Endothelial cell of umbilical vein (primary cell): ENCODE measurements at regions of chr6 and their contacts with region 1.

Region 1: DNA sequence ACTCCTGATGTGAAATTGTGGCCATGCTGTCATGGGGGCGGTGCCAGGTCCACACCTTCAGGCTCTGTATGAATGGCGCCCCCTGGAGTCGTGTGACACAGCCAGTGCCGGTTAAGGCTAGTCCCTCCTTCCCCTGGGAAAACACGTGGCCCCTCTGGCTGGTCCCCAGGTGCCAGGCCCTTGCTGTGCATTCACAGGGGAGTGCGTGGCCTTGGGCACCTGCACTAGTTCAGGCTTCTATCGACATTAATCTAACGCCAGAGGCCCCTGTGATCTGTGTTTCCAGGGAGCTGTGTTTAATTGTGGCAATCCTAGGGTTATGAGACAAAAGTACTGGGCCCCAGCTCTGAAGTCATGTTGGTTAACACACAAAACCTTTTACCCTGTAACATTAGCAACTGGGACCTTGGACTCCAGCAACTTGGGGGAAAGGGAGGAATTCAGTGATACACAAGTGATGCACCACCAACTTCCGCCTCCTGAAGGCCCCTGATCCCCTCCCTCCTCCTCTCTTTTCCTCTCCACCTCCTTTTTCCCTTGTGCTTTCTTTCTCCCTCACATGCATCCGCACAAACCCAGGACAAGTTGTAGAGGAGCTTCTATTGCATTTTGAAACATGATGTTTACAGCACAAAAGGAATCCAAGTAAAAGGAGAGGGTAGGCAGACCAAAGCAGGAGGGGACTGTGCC is 74.0 kb downstream of the SSR1 start:
- DNase-seq: peak; percentile 66
- H3K4me3 ChIP-seq: no peak overlapping the region
- H3K27ac ChIP-seq: no peak overlapping the region
- H3K4me1 ChIP-seq: no peaks in the 10 kb centered on the region
- H3K27me3 ChIP-seq: no peaks in the 10 kb centered on the region
- CTCF ChIP-seq: peak; percentile 79 to 83
- POLR2A ChIP-seq: no peak

Region 2: DNA sequence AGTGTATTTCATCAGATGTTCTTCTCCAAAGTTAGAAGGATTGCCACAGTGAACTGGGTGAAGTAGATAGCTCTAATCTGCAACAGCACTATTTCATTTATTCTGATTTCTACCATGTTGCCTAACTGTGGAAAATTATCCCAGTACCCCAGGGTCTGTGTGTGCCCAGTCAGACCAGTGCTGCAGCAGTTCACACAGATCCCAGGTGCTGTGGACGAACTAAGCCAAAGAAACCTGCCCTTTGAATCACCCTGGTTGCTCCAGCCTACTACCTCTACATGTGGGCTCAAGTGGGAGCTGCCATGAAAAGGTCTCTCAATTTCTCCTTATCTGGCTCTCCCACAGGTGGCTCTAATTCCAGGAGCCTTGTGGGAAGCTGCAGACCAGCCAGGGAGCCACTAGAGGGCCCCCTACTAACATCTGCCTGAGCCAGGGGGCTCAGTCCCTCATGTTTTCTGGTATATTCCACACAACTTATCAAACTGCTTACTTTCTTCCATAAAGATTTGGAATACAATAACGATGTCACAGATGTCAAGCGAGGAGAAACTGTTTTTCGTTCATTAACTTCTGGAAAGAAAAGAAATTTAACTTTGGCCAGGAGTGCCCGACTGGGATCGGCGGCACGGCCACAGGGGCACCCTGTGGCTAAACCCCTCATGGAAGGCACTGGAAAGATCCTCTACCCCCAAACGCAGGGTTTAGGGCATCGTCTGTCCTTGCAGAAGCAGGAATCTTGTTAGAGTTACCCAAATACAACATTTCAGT is 682.1 kb before region 1 on chr6:
- CTCF ChIA-PET with region 1: no interaction called
- POLR2A ChIA-PET with region 1: no interaction called
- dilution Hi-C with region 1: no loop called
- intact Hi-C with region 1: loop called (anchors 1 kb)
- DNase-seq: peak; percentile 44
- H3K4me3 ChIP-seq: no peak overlapping the region
- H3K27ac ChIP-seq: no peak overlapping the region
- H3K4me1 ChIP-seq: no peaks in the 10 kb centered on the region
- H3K27me3 ChIP-seq: no peaks in the 10 kb centered on the region
- CTCF ChIP-seq: peak; percentile 84 to 89
- POLR2A ChIP-seq: no peak

Region 3: GRCh38 chr6:6758915-6759654 is 480.0 kb before region 1 on chr6:
- CTCF ChIA-PET with region 1: interaction called, 8 read pairs
- POLR2A ChIA-PET with region 1: no interaction called
- dilution Hi-C with region 1: no loop called
- intact Hi-C with region 1: loop called (anchors 1 kb)
- DNase-seq: peak; percentile 64
- H3K4me3 ChIP-seq: no peak overlapping the region
- H3K27ac ChIP-seq: no peak overlapping the region
- H3K4me1 ChIP-seq: no peaks in the 10 kb centered on the region
- H3K27me3 ChIP-seq: peaks cover 0 to 4% of the 10 kb centered on the region in 2 experiments
- CTCF ChIP-seq: peak; percentile 40 to 45
- POLR2A ChIP-seq: no peak

Region 4: GRCh38 chr6:6811151-6812002 is 427.7 kb before region 1 on chr6:
- CTCF ChIA-PET with region 1: no interaction called
- POLR2A ChIA-PET with region 1: no interaction called
- dilution Hi-C with region 1: no loop called
- intact Hi-C with region 1: loop called (anchors 2 kb)
- DNase-seq: peak; percentile 91
- H3K4me3 ChIP-seq: peak overlapping the region; percentile 24 to 69 (median 37)
- H3K27ac ChIP-seq: peak overlapping the region; percentile 91
- H3K4me1 ChIP-seq: peaks cover 17% of the 10 kb centered on the region
- H3K27me3 ChIP-seq: peaks cover 2 to 12% of the 10 kb centered on the region in 2 experiments
- CTCF ChIP-seq: no peak
- POLR2A ChIP-seq: no peak

Region 5: DNA sequence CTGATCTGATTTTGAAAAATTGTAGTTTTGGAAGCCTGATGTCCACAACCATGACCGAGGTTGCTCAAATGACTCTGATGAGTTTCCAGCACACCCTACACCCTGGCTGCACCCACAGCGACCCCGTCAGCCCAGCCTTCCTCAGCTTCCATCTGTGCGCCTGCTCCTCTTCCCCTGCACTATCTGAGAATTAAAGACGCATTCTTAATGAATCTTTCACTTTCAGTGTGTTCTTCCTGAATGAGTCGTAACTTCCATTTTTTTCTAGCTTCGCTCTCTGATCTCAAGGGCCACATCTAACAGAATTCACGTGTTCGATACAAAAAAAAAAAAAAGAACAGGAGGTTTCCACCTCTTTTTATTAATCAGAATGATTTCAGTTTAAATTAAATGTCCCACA is 152.6 kb before region 1 on chr6:
- CTCF ChIA-PET with region 1: no interaction called
- POLR2A ChIA-PET with region 1: no interaction called
- dilution Hi-C with region 1: no loop called
- intact Hi-C with region 1: loop called (anchors 1 kb)
- DNase-seq: peak; percentile 57
- H3K4me3 ChIP-seq: peak overlapping the region; percentile 27 to 90 (median 85)
- H3K27ac ChIP-seq: no peak overlapping the region
- H3K4me1 ChIP-seq: peaks cover 8% of the 10 kb centered on the region
- H3K27me3 ChIP-seq: no peaks in the 10 kb centered on the region
- CTCF ChIP-seq: no peak
- POLR2A ChIP-seq: no peak

Region 6: DNA sequence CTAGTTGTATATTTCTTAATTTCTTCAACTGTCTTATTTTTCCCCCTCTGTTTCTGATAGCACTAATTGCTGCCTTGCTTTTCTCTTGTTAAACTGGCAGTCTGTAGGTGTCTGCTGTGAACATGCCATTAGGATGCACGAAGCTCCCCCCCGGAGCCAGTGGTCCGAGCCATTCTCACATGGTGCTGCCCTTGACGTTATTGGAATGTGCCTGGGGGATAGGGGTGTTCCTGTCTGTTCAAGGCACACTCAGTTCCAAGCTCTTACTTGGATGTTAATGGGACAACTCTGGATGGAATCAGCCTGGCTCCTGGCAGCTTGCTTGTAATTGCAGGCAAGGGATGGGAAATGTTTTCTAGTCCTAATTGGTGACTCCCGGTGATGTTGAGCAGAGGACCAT is 62.8 kb before region 1 on chr6:
- CTCF ChIA-PET with region 1: no interaction called
- POLR2A ChIA-PET with region 1: no interaction called
- dilution Hi-C with region 1: no loop called
- intact Hi-C with region 1: no loop called
- DNase-seq: no peak
- H3K4me3 ChIP-seq: no peak overlapping the region
- H3K27ac ChIP-seq: no peak overlapping the region
- H3K4me1 ChIP-seq: peaks cover 12% of the 10 kb centered on the region
- H3K27me3 ChIP-seq: no peaks in the 10 kb centered on the region
- CTCF ChIP-seq: no peak
- POLR2A ChIP-seq: no peak

Region 7: GRCh38 chr6:7254980-7255835 is 16.2 kb after region 1 on chr6:
- CTCF ChIA-PET with region 1: interaction called, 14 read pairs
- POLR2A ChIA-PET with region 1: no interaction called
- dilution Hi-C with region 1: no loop called
- intact Hi-C with region 1: no loop called
- DNase-seq: no peak
- H3K4me3 ChIP-seq: no peak overlapping the region
- H3K27ac ChIP-seq: no peak overlapping the region
- H3K4me1 ChIP-seq: no peaks in the 10 kb centered on the region
- H3K27me3 ChIP-seq: no peaks in the 10 kb centered on the region
- CTCF ChIP-seq: no peak
- POLR2A ChIP-seq: no peak

Region 8: GRCh38 chr6:8102122-8102958 is 863.3 kb after region 1 on chr6 and contains the start of gene EEF1E1:
- CTCF ChIA-PET with region 1: no interaction called
- POLR2A ChIA-PET with region 1: no interaction called
- dilution Hi-C with region 1: no loop called
- intact Hi-C with region 1: no loop called
- DNase-seq: peak; percentile 96
- H3K4me3 ChIP-seq: peak within 1 kb of the TSS; percentile 67 to 99 (median 89)
- H3K27ac ChIP-seq: peak within 1 kb of the TSS; percentile 70
- H3K4me1 ChIP-seq: peaks cover 15% of the 10 kb centered on the region
- H3K27me3 ChIP-seq: no peaks in the 10 kb centered on the region
- CTCF ChIP-seq: no peak
- POLR2A ChIP-seq: peak; percentile 81
- total RNA-seq, gene EEF1E1: 58.1 and 62.4 TPM in 2 replicates